CD4-positive, alpha-beta memory T cell (primary cell): ENCODE measurements at regions of chr3 and their contacts with region 1.

Region 1: DNA sequence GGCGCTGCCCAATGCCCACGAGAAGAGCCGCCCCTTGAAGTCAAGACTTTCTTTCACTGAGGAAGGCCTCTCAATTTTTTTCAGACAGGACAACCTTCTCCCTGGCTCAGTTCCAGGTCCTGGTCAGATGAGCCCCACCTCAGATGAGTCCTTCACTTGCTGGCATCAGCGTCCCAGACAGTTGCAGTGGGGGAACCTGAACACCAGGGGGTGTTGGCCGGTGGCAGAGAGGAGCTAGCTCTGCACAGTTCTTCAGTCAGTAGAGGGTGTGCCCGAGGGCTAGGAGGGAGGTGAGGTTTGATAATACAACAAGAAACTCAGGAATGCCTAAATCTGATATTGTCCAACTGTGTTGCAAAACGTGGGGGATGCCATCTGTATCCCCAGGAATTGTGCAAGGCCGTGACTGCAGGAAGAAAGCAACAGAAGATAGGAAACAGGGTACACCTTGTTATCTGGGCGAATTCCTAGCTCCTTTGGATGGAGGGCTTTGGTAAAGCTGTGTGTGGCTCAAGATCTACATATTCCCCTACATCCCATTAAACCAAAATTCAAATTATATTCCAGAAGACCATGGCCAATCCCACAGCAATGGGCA is 34.3 kb downstream of the CCR3 start:
- DNase-seq: peak; percentile 69 to 81 (median 73)
- H3K4me3 ChIP-seq: no peak overlapping the region
- H3K4me3 Mint-ChIP-seq: peak overlapping the region in 6 of 8 donors; percentile 3 to 81 (median 34)
- H3K27ac ChIP-seq: no peak overlapping the region
- H3K27ac Mint-ChIP-seq: peak overlapping the region; percentile 4 to 96 (median 81)
- H3K4me1 ChIP-seq: peaks cover 46% of the 10 kb centered on the region
- H3K4me1 Mint-ChIP-seq: peaks cover 29 to 53% (median 38%) of the 10 kb centered on the region in 4 donors
- H3K27me3 ChIP-seq: no peaks in the 10 kb centered on the region
- H3K27me3 Mint-ChIP-seq: peaks cover 0 to 1% of the 10 kb centered on the region in 2 donors

Region 2: GRCh38 chr3:46089237-46090011 is 187.2 kb before region 1 on chr3:
- CTCF ChIA-PET with region 1: no interaction called
- POLR2A ChIA-PET with region 1: no interaction called
- intact Hi-C with region 1: loop called (anchors 10 kb)
- DNase-seq: no peak
- H3K4me3 ChIP-seq: no peak overlapping the region
- H3K4me3 Mint-ChIP-seq: no peak overlapping the region
- H3K27ac ChIP-seq: no peak overlapping the region
- H3K27ac Mint-ChIP-seq: no peak overlapping the region
- H3K4me1 ChIP-seq: peaks cover 6% of the 10 kb centered on the region
- H3K4me1 Mint-ChIP-seq: peaks cover 3 to 7% (median 3%) of the 10 kb centered on the region in 4 donors
- H3K27me3 ChIP-seq: no peaks in the 10 kb centered on the region
- H3K27me3 Mint-ChIP-seq: no peaks in the 10 kb centered on the region

Region 3: DNA sequence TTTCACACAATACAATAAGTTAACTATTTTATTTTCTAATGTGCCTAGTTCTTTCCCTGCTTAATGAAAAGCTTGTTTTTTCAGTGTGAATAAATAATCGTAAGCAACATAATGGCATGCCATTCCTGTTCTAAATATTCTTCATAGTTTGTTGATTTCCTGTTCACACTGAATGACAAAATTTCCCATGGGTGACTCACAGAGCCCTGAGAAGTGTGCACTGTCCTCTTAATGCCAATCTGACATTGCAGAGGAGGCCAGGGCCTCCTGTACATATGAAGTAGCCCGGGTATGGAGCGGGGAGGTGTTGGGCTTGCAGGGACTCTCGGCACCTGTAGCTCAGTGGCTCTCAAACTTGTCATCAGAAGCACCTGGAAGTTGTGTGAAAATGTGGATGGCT is 10.0 kb before region 1 on chr3:
- CTCF ChIA-PET with region 1: interaction called, 23 read pairs
- POLR2A ChIA-PET with region 1: no interaction called
- intact Hi-C with region 1: no loop called
- DNase-seq: no peak
- H3K4me3 ChIP-seq: no peak overlapping the region
- H3K4me3 Mint-ChIP-seq: no peak overlapping the region
- H3K27ac ChIP-seq: no peak overlapping the region
- H3K27ac Mint-ChIP-seq: no peak overlapping the region
- H3K4me1 ChIP-seq: peaks cover 30% of the 10 kb centered on the region
- H3K4me1 Mint-ChIP-seq: peaks cover 14 to 44% (median 32%) of the 10 kb centered on the region in 4 donors
- H3K27me3 ChIP-seq: no peaks in the 10 kb centered on the region
- H3K27me3 Mint-ChIP-seq: no peaks in the 10 kb centered on the region

Region 4: GRCh38 chr3:46297658-46298463 is 21.3 kb after region 1 on chr3:
- CTCF ChIA-PET with region 1: interaction called, 10 read pairs
- POLR2A ChIA-PET with region 1: interaction called, 8 read pairs
- intact Hi-C with region 1: no loop called
- DNase-seq: no peak
- H3K4me3 ChIP-seq: no peak overlapping the region
- H3K4me3 Mint-ChIP-seq: peak overlapping the region in 7 of 8 donors; percentile 3 to 79 (median 37)
- H3K27ac ChIP-seq: peak overlapping the region; percentile 25
- H3K27ac Mint-ChIP-seq: peak overlapping the region; percentile 69 to 91 (median 79)
- H3K4me1 ChIP-seq: peaks cover 86% of the 10 kb centered on the region
- H3K4me1 Mint-ChIP-seq: peaks cover 68 to 97% (median 86%) of the 10 kb centered on the region in 4 donors
- H3K27me3 ChIP-seq: no peaks in the 10 kb centered on the region
- H3K27me3 Mint-ChIP-seq: no peaks in the 10 kb centered on the region

Region 5: GRCh38 chr3:46359733-46360493 is 83.3 kb after region 1 on chr3:
- CTCF ChIA-PET with region 1: interaction called, 12 read pairs
- POLR2A ChIA-PET with region 1: interaction called, 7 read pairs
- intact Hi-C with region 1: no loop called
- DNase-seq: peak in 1 of 5 donors; percentile 72
- H3K4me3 ChIP-seq: no peak overlapping the region
- H3K4me3 Mint-ChIP-seq: peak overlapping the region in 7 of 8 donors; percentile 43 to 95 (median 86)
- H3K27ac ChIP-seq: peak overlapping the region; percentile 46
- H3K27ac Mint-ChIP-seq: peak overlapping the region; percentile 73 to 94 (median 91)
- H3K4me1 ChIP-seq: peaks cover 71% of the 10 kb centered on the region
- H3K4me1 Mint-ChIP-seq: peaks cover 37 to 91% (median 69%) of the 10 kb centered on the region in 4 donors
- H3K27me3 ChIP-seq: no peaks in the 10 kb centered on the region
- H3K27me3 Mint-ChIP-seq: no peaks in the 10 kb centered on the region

Region 6: GRCh38 chr3:46378426-46378942 is 101.9 kb after region 1 on chr3:
- CTCF ChIA-PET with region 1: interaction called, 73 read pairs
- POLR2A ChIA-PET with region 1: interaction called, 86 read pairs
- intact Hi-C with region 1: no loop called
- DNase-seq: peak; percentile 49 to 55 (median 49)
- H3K4me3 ChIP-seq: no peak overlapping the region
- H3K4me3 Mint-ChIP-seq: peak overlapping the region in 1 of 8 donors; percentile 9
- H3K27ac ChIP-seq: no peak overlapping the region
- H3K27ac Mint-ChIP-seq: peak overlapping the region in 4 of 7 donors; percentile 17 to 55 (median 34)
- H3K4me1 ChIP-seq: peaks cover 52% of the 10 kb centered on the region
- H3K4me1 Mint-ChIP-seq: peaks cover 36 to 74% (median 53%) of the 10 kb centered on the region in 4 donors
- H3K27me3 ChIP-seq: no peaks in the 10 kb centered on the region
- H3K27me3 Mint-ChIP-seq: no peaks in the 10 kb centered on the region

Region 7: GRCh38 chr3:46558184-46559043 is 281.8 kb after region 1 on chr3:
- CTCF ChIA-PET with region 1: interaction called, 5 read pairs
- POLR2A ChIA-PET with region 1: no interaction called
- intact Hi-C with region 1: loop called (anchors 5 kb)
- DNase-seq: peak; percentile 68 to 74 (median 73)
- H3K4me3 ChIP-seq: peak overlapping the region in 1 of 2 donors; percentile 25
- H3K4me3 Mint-ChIP-seq: peak overlapping the region; percentile 76 to 87 (median 82)
- H3K27ac ChIP-seq: no peak overlapping the region
- H3K27ac Mint-ChIP-seq: peak overlapping the region in 6 of 7 donors; percentile 13 to 71 (median 36)
- H3K4me1 ChIP-seq: peaks cover 14% of the 10 kb centered on the region
- H3K4me1 Mint-ChIP-seq: peaks cover 10 to 17% (median 15%) of the 10 kb centered on the region in 4 donors
- H3K27me3 ChIP-seq: no peaks in the 10 kb centered on the region
- H3K27me3 Mint-ChIP-seq: peaks cover 1 to 4% of the 10 kb centered on the region in 2 donors

Region 8: DNA sequence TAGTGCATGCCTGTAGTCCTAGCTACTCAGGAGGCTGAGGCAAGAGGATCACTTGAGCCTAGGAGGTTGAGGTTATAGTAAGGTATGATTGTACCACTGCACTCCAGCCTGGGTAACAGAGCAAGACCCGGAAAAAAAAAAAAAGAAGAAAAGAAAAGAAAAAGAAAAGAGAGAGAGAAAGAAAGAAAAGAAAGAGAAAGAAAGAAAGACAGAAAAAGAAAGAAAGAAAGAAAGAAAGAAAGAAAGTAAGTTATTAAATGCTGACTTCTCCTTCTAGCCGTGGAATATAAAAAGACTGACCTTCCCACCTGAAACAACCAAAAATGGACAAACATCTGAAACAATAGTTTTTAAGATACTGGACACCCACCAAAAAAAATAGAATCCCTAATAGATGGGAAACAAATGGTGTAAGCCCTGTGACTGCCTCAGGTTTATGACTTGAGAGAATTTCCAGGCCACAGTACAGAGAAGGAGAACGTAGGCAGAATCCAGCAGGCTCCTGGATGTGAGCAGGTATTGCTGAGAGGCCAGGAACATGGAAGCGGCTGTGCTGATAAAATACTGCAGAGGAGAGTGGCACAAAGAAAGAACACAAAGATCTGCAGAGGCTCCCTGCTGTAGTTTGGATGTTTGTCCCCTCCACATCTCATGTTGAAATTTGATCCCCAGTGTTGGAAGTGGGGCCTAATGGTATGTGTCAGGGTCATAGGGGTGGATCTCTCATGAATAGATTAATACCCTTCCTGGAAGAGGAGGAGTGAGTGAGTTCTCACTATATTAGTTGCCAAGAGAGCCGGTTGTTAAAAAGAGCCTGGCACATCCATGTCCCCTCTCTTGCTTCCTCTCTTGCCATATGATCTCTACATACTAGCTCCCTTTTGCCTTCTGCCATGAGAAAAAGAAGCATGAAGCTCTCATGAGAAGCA is 482.9 kb after region 1 on chr3:
- CTCF ChIA-PET with region 1: no interaction called
- POLR2A ChIA-PET with region 1: no interaction called
- intact Hi-C with region 1: no loop called
- DNase-seq: no peak
- H3K4me3 ChIP-seq: no peak overlapping the region
- H3K4me3 Mint-ChIP-seq: no peak overlapping the region
- H3K27ac ChIP-seq: no peak overlapping the region
- H3K27ac Mint-ChIP-seq: no peak overlapping the region
- H3K4me1 ChIP-seq: no peaks in the 10 kb centered on the region
- H3K4me1 Mint-ChIP-seq: no peaks in the 10 kb centered on the region
- H3K27me3 ChIP-seq: no peaks in the 10 kb centered on the region
- H3K27me3 Mint-ChIP-seq: peaks cover 1 to 3% of the 10 kb centered on the region in 2 donors